ENCODE measurements at regions of chr12 and their contacts with region 1.

Region 1: DNA sequence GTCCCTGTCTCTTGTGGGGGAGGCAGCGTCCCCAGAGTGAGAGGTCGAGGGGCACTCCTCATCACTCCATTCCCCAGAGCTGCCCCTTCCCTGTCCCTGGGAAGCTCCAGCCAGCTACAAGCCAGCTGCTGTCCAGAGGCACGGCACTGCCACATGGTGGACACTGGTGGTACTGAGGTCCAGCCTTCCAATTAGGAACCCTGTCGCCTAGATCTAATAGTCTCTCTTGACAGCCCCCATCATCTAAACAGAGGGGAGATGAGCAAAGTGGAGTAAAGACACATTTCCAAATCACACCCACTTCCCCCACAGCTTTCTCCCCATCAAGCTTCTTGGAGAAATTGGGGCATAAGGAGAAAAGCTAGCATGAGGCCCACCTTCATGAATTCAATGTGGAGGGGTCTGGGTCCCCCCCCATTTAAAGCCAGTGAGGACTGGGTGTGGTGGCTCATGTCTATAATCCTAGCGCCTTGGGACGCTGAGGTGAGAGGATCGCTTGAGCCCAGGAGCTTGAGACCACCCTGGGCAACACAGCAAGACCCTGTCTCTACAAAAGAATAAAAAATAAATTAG is 2.1 kb upstream of the INHBE start:
- DNase-seq: peak; percentile 71
- H3K4me3 ChIP-seq: no peak overlapping the region
- H3K27ac ChIP-seq: no peak overlapping the region
- H3K4me1 ChIP-seq: peaks cover 32% of the 10 kb centered on the region
- CTCF ChIP-seq: peak; percentile 88

Region 2: GRCh38 chr12:57111031-57111734 is 341.8 kb before region 1 on chr12 and contains the start of gene STAT6:
- CTCF ChIA-PET with region 1: no interaction called
- POLR2A ChIA-PET with region 1: no interaction called
- intact Hi-C with region 1: no loop called
- DNase-seq: peak; percentile 89
- H3K4me3 ChIP-seq: peak within 1 kb of the TSS; percentile 90
- H3K27ac ChIP-seq: peak within 1 kb of the TSS; percentile 75
- H3K4me1 ChIP-seq: peaks cover 35% of the 10 kb centered on the region
- CTCF ChIP-seq: 0 out of 2 replicates have a peak, but pooled peaks have one; percentile 26
- total RNA-seq, gene STAT6: 72.3 and 73.6 TPM in 2 replicates

Region 3: DNA sequence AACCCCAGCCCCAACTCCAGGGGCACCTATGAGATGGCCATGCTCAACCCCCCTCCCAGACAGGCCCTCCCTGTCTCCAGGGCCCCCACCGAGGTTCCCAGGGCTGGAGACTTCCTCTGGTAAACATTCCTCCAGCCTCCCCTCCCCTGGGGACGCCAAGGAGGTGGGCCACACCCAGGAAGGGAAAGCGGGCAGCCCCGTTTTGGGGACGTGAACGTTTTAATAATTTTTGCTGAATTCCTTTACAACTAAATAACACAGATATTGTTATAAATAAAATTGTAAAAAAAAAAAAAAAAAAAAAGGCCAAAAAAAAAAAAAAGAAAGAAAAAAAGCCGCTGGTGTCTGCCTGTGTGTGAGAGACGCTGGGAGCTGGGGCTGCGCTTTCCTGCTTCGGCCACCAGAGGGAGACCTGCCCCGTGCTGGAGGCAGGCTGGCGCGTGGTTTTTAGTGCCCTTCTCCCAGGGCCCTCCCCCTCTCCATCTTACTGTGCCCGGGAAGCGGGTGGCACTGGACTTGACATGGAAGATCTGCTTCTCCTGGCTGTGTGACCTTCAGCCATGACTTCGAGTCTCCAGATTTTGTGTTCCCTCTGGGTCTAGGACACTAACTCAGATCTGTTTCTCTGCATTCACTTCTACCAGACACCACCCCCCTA is 239.8 kb before region 1 on chr12:
- CTCF ChIA-PET with region 1: interaction called, 5 read pairs
- POLR2A ChIA-PET with region 1: interaction called, 3 read pairs
- intact Hi-C with region 1: loop called (anchors 1 kb)
- DNase-seq: peak; percentile 85
- H3K4me3 ChIP-seq: no peak overlapping the region
- H3K27ac ChIP-seq: no peak overlapping the region
- H3K4me1 ChIP-seq: peaks cover 68% of the 10 kb centered on the region
- CTCF ChIP-seq: peak; percentile 91

Region 4: GRCh38 chr12:57263096-57263495 is 189.9 kb before region 1 on chr12:
- CTCF ChIA-PET with region 1: no interaction called
- POLR2A ChIA-PET with region 1: no interaction called
- intact Hi-C with region 1: loop called (anchors 1 kb)
- DNase-seq: no peak
- H3K4me3 ChIP-seq: no peak overlapping the region
- H3K27ac ChIP-seq: no peak overlapping the region
- H3K4me1 ChIP-seq: peaks cover 5% of the 10 kb centered on the region
- CTCF ChIP-seq: no peak

Region 5: GRCh38 chr12:57309420-57309819 is 143.6 kb before region 1 on chr12:
- CTCF ChIA-PET with region 1: interaction called, 11 read pairs
- POLR2A ChIA-PET with region 1: interaction called, 6 read pairs
- intact Hi-C with region 1: loop called (anchors 1 kb)
- DNase-seq: no peak
- H3K4me3 ChIP-seq: no peak overlapping the region
- H3K27ac ChIP-seq: no peak overlapping the region
- H3K4me1 ChIP-seq: no peaks in the 10 kb centered on the region
- CTCF ChIP-seq: no peak

Region 6: DNA sequence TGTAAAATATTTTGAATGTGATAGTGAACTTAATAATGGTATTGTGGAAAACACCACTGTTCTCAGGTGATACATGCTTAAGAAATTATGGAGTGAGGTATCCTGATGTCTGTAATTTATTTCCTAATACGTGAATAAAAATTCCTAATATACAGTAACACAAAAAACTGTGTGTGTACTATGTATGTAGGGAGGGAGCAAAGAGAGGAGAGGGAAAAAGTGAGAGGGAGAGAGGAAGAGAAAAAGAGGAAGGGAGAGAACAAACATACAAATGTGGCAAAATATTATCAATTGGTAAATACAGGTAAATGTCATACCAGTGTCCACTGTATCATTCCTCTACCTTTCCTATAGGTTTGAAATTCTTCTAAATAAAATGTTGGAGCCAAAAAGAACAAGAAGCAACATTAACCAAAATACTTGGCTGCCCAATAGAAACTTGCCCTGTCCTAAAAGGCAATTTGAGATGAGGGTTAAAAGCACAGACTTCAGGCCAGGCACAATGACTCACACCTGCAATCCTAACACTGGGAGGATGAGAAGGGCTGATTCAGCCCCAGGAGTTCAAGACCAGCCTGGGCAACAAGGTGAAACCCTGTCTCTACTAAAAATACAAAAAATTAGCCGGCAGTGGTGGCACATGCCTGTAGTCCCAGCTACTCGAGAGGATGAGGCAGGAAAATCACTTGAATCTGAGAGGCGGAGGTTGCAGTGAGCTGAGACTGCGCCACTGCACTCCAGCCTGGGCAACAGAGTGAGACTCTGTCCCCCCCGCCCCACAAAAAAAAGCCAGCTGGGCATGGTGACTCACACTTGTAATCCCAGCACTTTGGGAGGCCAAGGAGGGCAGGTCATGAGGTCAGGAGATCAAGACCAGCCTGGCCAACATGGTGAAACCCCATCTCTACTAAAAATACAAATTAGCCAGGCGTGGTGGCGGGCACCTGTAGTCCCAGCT is 36.7 kb before region 1 on chr12:
- CTCF ChIA-PET with region 1: no interaction called
- POLR2A ChIA-PET with region 1: no interaction called
- intact Hi-C with region 1: no loop called
- DNase-seq: no peak
- H3K4me3 ChIP-seq: no peak overlapping the region
- H3K27ac ChIP-seq: no peak overlapping the region
- H3K4me1 ChIP-seq: no peaks in the 10 kb centered on the region
- CTCF ChIP-seq: no peak

Region 7: DNA sequence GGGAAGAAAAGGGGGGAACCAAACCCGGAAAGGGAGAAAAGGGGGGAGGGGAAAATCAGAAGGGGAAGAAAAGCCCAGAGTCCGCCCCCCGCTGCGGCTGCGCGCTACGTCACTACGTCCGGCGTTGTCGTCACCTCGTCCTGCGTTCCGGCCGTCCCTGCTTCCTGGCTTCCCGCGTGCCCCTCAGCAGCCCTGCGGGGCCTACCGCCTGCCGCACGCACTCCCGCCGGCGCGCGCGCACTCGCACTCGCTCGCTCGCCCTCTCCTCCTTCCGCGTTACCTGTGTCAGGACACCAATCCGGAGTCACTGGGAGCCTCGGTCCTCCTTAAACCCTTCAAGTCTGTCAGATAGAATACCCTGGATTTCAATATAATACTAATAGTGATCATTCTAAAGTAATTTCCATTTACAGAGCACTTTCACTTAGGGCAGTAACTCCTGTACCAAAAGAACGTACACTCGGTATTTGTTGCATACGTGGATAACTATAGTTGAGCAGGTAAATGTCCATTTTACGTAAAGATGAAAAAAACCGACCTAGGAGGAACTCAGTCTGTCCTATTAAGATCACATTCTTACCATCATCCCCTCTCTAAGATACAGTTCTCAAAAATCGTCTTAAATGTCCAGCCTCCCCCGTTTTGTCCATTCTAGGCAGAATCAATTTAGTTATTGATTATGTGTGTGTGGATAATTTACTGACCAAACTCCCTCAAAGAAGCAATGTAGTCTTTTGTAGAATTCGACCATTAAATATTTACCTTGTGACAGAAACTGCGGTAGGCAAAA is 21.9 kb before region 1 on chr12 and contains the start of gene R3HDM2:
- CTCF ChIA-PET with region 1: interaction called, 12 read pairs
- POLR2A ChIA-PET with region 1: interaction called, 8 read pairs
- intact Hi-C with region 1: no loop called
- DNase-seq: peak; percentile 96
- H3K4me3 ChIP-seq: peak within 1 kb of the TSS; percentile 70
- H3K27ac ChIP-seq: peak within 1 kb of the TSS; percentile 59
- H3K4me1 ChIP-seq: peaks cover 30% of the 10 kb centered on the region
- CTCF ChIP-seq: no peak
- total RNA-seq, gene R3HDM2: 15.0 and 25.8 TPM in 2 replicates

Region 8: GRCh38 chr12:57441846-57442427 is 11.1 kb before region 1 on chr12:
- CTCF ChIA-PET with region 1: interaction called, 14 read pairs
- POLR2A ChIA-PET with region 1: interaction called, 4 read pairs
- intact Hi-C with region 1: no loop called
- DNase-seq: no peak
- H3K4me3 ChIP-seq: no peak overlapping the region
- H3K27ac ChIP-seq: no peak overlapping the region
- H3K4me1 ChIP-seq: no peaks in the 10 kb centered on the region
- CTCF ChIP-seq: no peak